H1 (cell line): ENCODE measurements at regions of chr10 and their contacts with region 1.

Region 1: GRCh38 chr10:28381903-28382347 is 79.1 kb upstream of the MPP7 start:
- DNase-seq: peak; percentile 39 to 90
- H3K4me3 ChIP-seq: no peak overlapping the region
- H3K27ac ChIP-seq: no peak overlapping the region
- H3K4me1 ChIP-seq: no peaks in the 10 kb centered on the region
- H3K27me3 ChIP-seq: no peaks in the 10 kb centered on the region
- CTCF ChIP-seq: peak in 2 of 3 experiments; percentile 93 to 95; a peak in 3 of 4 replicates
- EP300 ChIP-seq: no peak
- POLR2A ChIP-seq: no peak
- RAD21 ChIP-seq: peak; percentile 98 to 100

Region 2: DNA sequence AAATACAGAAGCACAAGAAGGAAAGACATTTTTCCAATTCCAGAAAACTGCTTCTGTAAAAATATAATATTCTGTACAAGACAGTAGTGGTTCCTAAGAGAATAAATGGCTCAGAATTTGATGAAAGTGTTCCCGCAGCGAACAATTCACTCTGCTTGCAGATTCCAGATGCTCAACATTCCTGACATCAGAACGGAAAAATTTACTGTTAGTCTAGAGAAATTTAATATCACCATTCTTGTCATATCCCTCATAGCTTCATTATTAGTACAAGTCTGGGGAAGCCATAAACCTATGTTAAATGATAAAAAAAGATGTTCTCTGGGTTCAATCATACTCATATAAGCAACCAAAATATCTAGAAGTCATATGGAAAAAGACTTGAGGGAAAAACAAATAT is 162.7 kb before region 1 on chr10:
- CTCF ChIA-PET with region 1: no interaction called
- POLR2A ChIA-PET with region 1: no interaction called
- DNase-seq: no peak
- H3K4me3 ChIP-seq: no peak overlapping the region
- H3K27ac ChIP-seq: no peak overlapping the region
- H3K4me1 ChIP-seq: peaks cover 2 to 14% (median 5%) of the 10 kb centered on the region in 4 experiments; a peak in 4 of 7 replicates
- H3K27me3 ChIP-seq: no peaks in the 10 kb centered on the region
- CTCF ChIP-seq: no peak
- EP300 ChIP-seq: no peak
- POLR2A ChIP-seq: no peak
- RAD21 ChIP-seq: no peak

Region 3: DNA sequence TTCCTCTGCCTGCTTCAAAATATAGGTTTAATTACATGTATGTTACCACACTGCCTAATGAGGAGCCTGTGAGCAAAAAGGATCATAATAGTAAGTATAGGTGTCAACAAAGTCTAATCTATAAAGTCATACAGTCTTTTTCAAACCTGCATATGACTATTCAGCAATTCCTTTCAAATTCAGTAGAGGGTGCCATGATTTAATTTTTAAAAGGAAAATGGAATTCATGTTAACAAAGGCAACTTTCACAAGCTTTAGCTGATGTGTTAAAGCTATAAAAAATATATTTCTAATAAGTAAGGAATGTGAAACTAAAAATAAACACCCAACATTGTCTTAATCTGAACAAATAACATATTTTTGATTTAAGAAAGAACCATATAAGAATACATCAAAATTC is 131.1 kb before region 1 on chr10:
- CTCF ChIA-PET with region 1: interaction called, 88 read pairs
- POLR2A ChIA-PET with region 1: no interaction called
- DNase-seq: no peak
- H3K4me3 ChIP-seq: no peak overlapping the region
- H3K27ac ChIP-seq: no peak overlapping the region
- H3K4me1 ChIP-seq: no peaks in the 10 kb centered on the region
- H3K27me3 ChIP-seq: no peaks in the 10 kb centered on the region
- CTCF ChIP-seq: no peak; a peak in 1 of 4 replicates
- EP300 ChIP-seq: no peak
- POLR2A ChIP-seq: no peak
- RAD21 ChIP-seq: peak in 1 of 2 experiments; percentile 24; a peak in 2 of 4 replicates

Region 4: DNA sequence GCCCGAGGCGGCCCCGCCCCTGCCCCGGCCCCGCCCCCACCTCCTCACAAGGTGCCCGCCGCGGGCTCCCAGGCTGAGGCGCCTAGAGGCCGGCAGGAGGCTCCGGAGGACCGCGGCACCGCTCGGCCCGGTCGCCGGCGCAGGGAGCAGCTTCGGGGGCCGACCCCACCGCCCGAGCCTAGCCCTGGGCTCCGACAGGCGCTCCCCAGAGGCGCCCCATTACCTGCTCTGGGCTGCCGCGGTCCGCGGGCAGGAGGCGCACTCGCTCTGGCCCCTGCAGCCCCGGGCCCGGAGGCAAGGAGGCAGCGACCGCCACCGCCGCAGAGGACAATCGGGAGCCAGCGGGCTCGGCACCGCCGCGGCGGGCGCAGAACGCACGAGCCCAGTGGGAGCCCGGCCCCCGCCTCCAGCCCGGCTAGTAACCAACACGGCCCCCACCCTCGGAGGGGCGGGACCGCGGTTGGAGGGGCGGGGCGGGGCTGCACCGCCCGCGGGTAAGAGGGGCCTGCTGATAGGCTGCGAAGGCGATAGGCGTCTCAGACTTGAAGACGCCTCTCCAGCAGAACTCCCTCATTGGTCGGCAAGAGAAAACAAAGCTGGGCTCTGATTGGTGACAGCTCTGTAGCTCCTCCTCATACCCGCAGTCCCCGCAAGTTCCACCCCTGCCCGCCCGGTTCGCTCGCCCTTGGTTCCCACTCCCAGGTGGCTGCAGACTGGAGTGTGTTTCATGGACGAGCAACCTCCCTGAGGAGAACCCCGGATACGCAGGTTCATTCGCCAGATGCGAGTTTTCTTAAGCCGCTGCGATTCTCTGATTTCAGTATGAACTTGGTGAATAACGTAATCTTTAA is 79.1 kb before region 1 on chr10 and contains the start of gene MPP7:
- CTCF ChIA-PET with region 1: interaction called, 60 read pairs
- POLR2A ChIA-PET with region 1: interaction called, 3 read pairs
- DNase-seq: peak; percentile 90 to 93
- H3K4me3 ChIP-seq: peak within 1 kb of the TSS; percentile 66 to 71 (median 70)
- H3K27ac ChIP-seq: peak within 1 kb of the TSS; percentile 80; the same call in 1 of the 2 replicates
- H3K4me1 ChIP-seq: peaks cover 0 to 3% (median under 1%) of the 10 kb centered on the region in 4 experiments; a peak in 3 of 7 replicates
- H3K27me3 ChIP-seq: peaks cover 0 to 1% (median 0%) of the 10 kb centered on the region in 4 experiments; a peak in 2 of 7 replicates
- CTCF ChIP-seq: peak in 2 of 3 experiments; percentile 36 to 37; a peak in 3 of 4 replicates
- EP300 ChIP-seq: 0 out of 3 replicates have a peak, but pooled peaks of 1 of the 2 experiments have one; percentile 4
- POLR2A ChIP-seq: peak in 1 of 2 experiments; percentile 89; a peak in 2 of 3 replicates
- RAD21 ChIP-seq: peak; percentile 36 to 52; a peak in 3 of 4 replicates
- total RNA-seq, gene MPP7: 9.3 and 9.8 TPM in 2 replicates

Region 5: GRCh38 chr10:28365840-28366239 is 16.1 kb before region 1 on chr10:
- CTCF ChIA-PET with region 1: interaction called, 29 read pairs
- POLR2A ChIA-PET with region 1: no interaction called
- DNase-seq: no peak
- H3K4me3 ChIP-seq: no peak overlapping the region
- H3K27ac ChIP-seq: no peak overlapping the region
- H3K4me1 ChIP-seq: peaks cover 0 to 5% (median under 1%) of the 10 kb centered on the region in 4 experiments; a peak in 1 of 7 replicates
- H3K27me3 ChIP-seq: no peaks in the 10 kb centered on the region
- CTCF ChIP-seq: no peak
- EP300 ChIP-seq: no peak
- POLR2A ChIP-seq: no peak
- RAD21 ChIP-seq: no peak

Region 6: GRCh38 chr10:28393966-28394568 is 12.1 kb after region 1 on chr10:
- CTCF ChIA-PET with region 1: interaction called, 44 read pairs
- POLR2A ChIA-PET with region 1: no interaction called
- DNase-seq: peak; percentile 41 to 84
- H3K4me3 ChIP-seq: no peak overlapping the region
- H3K27ac ChIP-seq: no peak overlapping the region
- H3K4me1 ChIP-seq: no peaks in the 10 kb centered on the region
- H3K27me3 ChIP-seq: no peaks in the 10 kb centered on the region
- CTCF ChIP-seq: peak; percentile 79 to 90 (median 86)
- EP300 ChIP-seq: no peak
- POLR2A ChIP-seq: no peak
- RAD21 ChIP-seq: peak; percentile 85 to 89